Calu3 (cell line): ENCODE measurements at regions of chr12 and their contacts with region 1.

Region 1: DNA sequence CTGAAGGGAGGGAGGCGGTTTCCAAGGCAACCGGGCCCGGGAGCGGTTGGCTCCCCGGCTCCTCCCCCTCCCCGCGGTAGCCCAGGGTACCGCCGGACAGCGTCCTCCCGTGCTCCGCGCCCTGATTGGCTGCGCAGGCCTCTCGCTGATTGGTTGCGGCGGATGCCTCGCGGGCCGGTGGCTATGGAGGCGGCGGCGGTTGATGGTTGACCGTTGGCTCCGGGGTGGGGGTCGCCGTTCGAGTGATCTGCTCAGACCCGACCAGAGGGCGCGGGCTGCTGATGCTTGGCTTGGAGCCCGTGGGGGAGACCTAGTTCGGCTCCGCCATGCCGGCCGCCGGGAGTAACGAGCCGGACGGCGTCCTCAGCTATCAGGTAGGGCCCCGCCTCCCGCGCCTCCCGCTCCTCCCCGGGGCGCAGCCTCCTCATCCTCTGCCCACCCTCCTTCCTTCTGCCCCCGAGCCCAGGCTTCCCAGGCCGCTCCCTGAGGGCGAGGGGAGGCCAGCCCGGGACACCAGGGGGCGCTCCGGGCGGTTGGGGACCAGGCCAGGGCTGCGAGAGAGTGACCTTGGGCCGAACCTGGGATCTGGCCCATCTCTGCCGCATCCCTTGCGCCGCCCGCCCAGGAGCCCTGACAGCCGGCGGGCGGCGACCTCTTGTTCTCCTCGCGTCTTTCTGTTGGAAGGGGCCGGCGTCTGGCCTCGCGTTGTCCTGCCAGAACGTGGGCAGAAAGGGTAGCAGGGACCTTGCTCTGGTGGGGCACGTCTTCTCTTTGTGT is at the start of gene SLC4A8:
- DNase-seq: peak; percentile 76
- H3K4me3 Mint-ChIP-seq: peak within 1 kb of the TSS; percentile 48
- H3K27ac Mint-ChIP-seq: no peak within 1 kb of the TSS
- H3K4me1 Mint-ChIP-seq: no peaks in the 10 kb centered on the region
- H3K27me3 Mint-ChIP-seq: peaks cover 77% of the 10 kb centered on the region
- CTCF ChIP-seq: peak; percentile 77
- total RNA-seq, gene SLC4A8: 0.76 and 1.1 TPM in 2 replicates

Region 2: GRCh38 chr12:51531978-51532497 is 107.2 kb after region 1 on chr12:
- CTCF ChIA-PET with region 1: interaction called, 12 read pairs
- intact Hi-C with region 1: loop called (anchors 1 kb)
- DNase-seq: peak; percentile 70
- H3K4me3 Mint-ChIP-seq: no peak overlapping the region
- H3K27ac Mint-ChIP-seq: no peak overlapping the region
- H3K4me1 Mint-ChIP-seq: peaks cover 12% of the 10 kb centered on the region
- H3K27me3 Mint-ChIP-seq: peaks cover 28% of the 10 kb centered on the region
- CTCF ChIP-seq: peak; percentile 54

Region 3: DNA sequence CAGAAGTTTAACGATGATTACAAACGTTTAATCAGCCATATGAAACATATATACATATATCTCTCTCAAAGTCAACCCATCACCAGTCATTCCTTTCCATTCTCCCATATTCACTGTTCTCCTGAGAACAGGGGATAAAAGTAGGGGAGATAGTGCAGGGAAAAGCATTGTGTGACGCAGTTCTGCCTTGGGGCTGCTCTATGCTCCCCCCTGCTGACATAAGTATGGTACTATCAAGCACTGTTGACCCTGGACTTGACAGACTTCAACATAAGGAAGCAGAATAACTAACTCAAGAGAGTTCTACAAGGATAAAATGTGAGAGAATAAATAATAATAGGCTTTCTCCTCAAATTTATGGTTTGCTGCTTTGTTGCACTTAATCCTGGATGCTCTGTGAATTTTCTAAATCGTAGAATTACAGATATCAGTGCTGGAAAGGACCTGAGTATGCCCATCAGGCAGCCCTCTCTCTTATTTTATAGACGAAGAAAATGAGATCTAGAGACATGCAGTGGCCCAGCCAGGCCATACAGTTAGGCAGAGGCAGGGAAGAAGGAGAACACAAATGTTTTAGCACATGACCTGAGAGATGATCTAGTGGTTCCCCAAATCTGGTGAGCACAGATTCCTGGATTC is 253.4 kb after region 1 on chr12:
- CTCF ChIA-PET with region 1: interaction called, 3 read pairs
- intact Hi-C with region 1: loop called (anchors 10 kb)
- DNase-seq: peak; percentile 45
- H3K4me3 Mint-ChIP-seq: no peak overlapping the region
- H3K27ac Mint-ChIP-seq: no peak overlapping the region
- H3K4me1 Mint-ChIP-seq: peaks cover 18% of the 10 kb centered on the region
- H3K27me3 Mint-ChIP-seq: no peaks in the 10 kb centered on the region
- CTCF ChIP-seq: peak; percentile 46

Region 4: DNA sequence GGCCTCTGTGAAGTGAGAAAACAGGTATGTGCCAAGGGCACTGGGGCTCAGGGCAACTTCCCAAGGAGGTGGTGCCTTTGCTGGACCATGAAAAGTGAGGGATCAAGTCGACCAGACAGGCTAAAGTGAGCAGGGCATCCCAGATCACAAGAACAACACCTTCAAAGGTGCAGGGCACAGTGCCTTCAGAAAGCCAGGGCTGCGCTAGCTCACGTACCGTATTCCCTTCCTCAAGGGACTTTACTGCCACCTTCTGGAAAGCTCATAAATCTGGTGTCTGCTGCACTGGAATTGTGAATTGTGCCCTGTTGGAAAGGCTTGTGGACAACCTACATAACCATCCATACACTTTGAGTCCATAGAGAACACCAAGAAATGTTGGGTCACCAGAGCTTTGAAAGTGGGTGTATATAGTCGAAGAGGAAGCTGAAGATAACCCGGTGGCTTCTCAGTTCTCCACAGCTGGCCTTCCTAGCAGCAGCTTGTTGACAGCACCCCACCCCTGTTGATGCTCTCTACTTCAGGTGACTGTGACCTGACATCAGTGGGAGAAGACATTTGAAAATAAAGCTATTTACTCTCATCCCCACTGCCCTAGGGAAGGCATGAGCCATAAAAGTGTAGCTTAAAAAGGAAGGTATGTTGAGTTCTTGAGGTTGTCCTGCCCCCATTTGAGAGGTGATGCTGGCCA is 399.2 kb after region 1 on chr12:
- CTCF ChIA-PET with region 1: interaction called, 12 read pairs
- intact Hi-C with region 1: loop called (anchors 2 kb)
- DNase-seq: peak; percentile 45
- H3K4me3 Mint-ChIP-seq: no peak overlapping the region
- H3K27ac Mint-ChIP-seq: no peak overlapping the region
- H3K4me1 Mint-ChIP-seq: peaks cover 8% of the 10 kb centered on the region
- H3K27me3 Mint-ChIP-seq: no peaks in the 10 kb centered on the region
- CTCF ChIP-seq: no peak

Region 5: GRCh38 chr12:51874013-51874412 is 449.2 kb after region 1 on chr12:
- CTCF ChIA-PET with region 1: no interaction called
- intact Hi-C with region 1: loop called (anchors 2 kb)
- DNase-seq: no peak
- H3K4me3 Mint-ChIP-seq: no peak overlapping the region
- H3K27ac Mint-ChIP-seq: no peak overlapping the region
- H3K4me1 Mint-ChIP-seq: peaks cover 5% of the 10 kb centered on the region
- H3K27me3 Mint-ChIP-seq: peaks cover 50% of the 10 kb centered on the region
- CTCF ChIP-seq: no peak